ENCODE measurements at regions of chr1 and their contacts with region 1.

Region 1: DNA sequence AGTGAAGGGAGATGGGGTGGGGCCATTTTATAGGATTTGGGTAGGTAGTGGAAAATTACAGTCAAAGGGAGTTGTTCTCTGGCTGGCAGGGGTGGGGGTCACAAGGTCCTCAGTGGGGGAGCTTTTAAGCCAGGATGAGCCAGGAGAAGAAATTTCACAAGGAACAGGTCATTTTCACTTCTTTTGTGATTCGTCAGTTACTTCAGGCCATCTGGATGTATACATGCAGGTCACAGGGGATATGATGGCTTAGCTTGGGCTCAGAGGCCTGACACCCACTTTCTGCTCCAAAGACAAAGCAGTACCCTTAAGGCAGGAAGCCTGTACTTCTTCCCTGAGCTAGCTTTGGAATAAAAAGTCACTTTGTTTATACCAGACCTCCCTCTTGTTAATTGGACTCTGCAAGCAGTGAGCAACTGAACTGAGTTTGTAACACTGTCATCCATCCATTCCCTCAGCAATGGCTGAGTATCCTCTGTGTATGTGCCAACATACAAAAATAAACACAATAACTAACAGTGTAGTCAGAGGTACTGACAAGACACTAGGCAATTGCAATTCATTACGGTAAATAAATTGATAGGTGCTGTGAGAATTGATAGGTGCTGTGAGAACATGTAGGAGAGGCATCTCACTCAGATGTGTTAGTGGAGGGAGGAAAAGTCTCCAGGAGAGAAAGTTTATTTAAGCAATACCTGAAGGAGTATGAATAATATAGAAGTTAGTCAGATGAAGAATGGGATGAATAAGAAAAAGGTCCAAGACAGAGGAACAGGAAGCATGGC is 14.7 kb upstream of the RGS2 start:
- DNase-seq: no peak
- H3K4me3 Mint-ChIP-seq: no peak overlapping the region
- H3K27ac Mint-ChIP-seq: no peak overlapping the region
- H3K4me1 Mint-ChIP-seq: no peaks in the 10 kb centered on the region
- H3K27me3 Mint-ChIP-seq: no peaks in the 10 kb centered on the region
- CTCF ChIP-seq: no peak

Region 2: DNA sequence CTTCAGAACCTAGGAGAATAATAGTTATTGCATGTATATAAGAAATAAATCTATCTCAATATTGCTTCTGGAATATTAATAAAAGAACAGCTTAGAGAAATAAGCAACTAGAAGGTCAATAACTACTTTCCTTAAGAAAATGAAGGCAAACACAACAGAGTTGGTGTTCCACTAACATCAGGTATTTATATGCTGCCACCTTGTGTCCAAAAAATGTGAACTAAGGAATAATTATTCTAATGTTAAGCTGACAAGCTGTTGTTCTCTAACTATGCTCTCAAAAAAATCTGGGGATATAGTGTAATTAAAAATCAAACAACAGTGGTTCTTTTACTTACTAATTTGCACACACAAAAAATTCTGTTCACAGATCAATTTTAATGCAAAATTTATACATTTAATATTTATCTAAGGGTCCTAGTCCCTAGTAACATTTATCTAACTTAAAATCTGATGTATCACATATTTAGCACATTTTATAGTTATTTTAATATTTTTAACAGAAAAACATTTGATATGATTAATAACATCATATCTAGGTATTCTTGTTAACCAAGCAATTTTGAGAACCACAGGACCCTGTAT is 225.4 kb after region 1 on chr1:
- CTCF ChIA-PET with region 1: interaction called, 226 read pairs
- POLR2A ChIA-PET with region 1: interaction called, 6 read pairs
- intact Hi-C with region 1: no loop called
- DNase-seq: peak; percentile 76
- H3K4me3 Mint-ChIP-seq: no peak overlapping the region
- H3K27ac Mint-ChIP-seq: peak overlapping the region; percentile 31
- H3K4me1 Mint-ChIP-seq: no peaks in the 10 kb centered on the region
- H3K27me3 Mint-ChIP-seq: no peaks in the 10 kb centered on the region
- CTCF ChIP-seq: peak; percentile 59

Measured in MCF 10A (cell line).